ENCODE measurements at regions of chr7 and their contacts with region 1.

Region 1: DNA sequence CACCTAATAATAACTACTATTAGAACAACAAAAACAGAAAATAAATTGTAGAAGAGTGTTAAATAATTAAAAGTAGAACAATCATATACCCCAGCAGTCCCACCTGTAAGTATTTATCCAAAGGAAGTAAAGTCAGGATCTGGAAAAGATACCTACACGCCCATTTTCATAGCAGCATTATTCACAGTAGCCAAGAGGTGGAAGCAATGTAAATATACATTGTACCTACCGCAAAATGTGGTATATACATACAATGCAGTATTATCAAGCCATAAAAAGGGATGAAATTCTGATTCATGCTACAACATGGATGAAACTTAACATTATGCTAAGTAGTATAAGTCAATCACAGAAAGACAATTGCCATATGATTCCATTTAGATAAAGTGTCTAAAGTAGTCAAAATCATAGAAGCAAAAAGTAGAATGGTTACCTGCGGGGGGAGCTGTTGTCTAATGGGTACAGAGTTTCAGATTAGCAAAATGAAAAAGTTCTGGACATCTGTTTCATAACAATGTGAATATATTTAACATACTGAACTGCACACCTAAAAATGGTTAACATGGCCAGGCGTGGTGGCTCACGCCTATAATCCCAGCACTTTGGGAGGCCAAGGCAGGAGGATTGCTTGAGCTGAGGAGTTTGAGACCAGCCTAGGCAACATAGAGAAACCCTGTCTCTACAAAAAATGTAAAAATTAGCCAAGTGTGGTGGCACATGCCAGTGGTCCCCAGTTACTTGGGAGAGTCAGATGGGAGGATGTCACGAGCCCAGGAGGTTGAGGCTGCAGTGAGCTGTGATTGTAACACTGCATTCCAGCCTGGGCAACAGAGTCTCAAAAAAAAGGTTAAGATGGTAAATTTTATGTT is 6.0 kb upstream of the TMED4 start:
- DNase-seq: peak; percentile 66
- ATAC-seq: peak; percentile 92
- H3K4me3 ChIP-seq: no peak overlapping the region
- H3K27ac ChIP-seq: no peak overlapping the region
- H3K4me1 ChIP-seq: peaks cover 2% of the 10 kb centered on the region; the same call in 1 of the 2 replicates
- H3K27me3 ChIP-seq: no peaks in the 10 kb centered on the region
- CTCF ChIP-seq: peak; percentile 84
- POLR2A ChIP-seq: no peak
- RAD21 ChIP-seq: peak; percentile 91

Region 2: DNA sequence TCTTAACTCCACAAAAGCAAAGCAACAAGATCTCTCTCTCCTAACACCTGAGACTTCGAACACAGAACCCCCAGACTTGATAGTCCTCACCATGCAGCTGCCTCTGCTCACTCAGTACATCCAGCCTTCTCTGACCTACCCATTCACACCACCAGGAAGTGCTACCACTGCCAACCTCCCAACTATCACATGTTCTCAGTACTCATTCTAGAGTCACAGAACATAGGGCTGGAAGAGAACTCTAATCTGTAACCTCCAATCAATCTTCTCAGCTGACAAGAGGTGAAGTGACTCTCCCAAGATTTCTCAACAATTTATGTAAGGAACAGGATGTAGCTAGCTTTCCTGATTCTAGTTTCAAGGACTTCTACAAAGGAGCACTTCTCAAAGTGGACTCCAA is 101.4 kb before region 1 on chr7:
- CTCF ChIA-PET with region 1: no interaction called
- POLR2A ChIA-PET with region 1: no interaction called
- dilution Hi-C with region 1: no loop called
- in situ Hi-C with region 1: no loop called
- intact Hi-C with region 1: no loop called
- DNase-seq: peak; percentile 49
- ATAC-seq: no peak
- H3K4me3 ChIP-seq: no peak overlapping the region
- H3K27ac ChIP-seq: no peak overlapping the region
- H3K4me1 ChIP-seq: peaks cover 2% of the 10 kb centered on the region; the same call in 1 of the 2 replicates
- H3K27me3 ChIP-seq: no peaks in the 10 kb centered on the region
- CTCF ChIP-seq: 0 out of 2 replicates have a peak, but pooled peaks have one; percentile 14
- POLR2A ChIP-seq: no peak
- RAD21 ChIP-seq: no peak

Region 3: GRCh38 chr7:44498230-44498954 is 89.7 kb before region 1 on chr7:
- CTCF ChIA-PET with region 1: no interaction called
- POLR2A ChIA-PET with region 1: no interaction called
- dilution Hi-C with region 1: no loop called
- in situ Hi-C with region 1: no loop called
- intact Hi-C with region 1: no loop called
- DNase-seq: no peak
- ATAC-seq: no peak
- H3K4me3 ChIP-seq: no peak overlapping the region
- H3K27ac ChIP-seq: no peak overlapping the region
- H3K4me1 ChIP-seq: no peaks in the 10 kb centered on the region
- H3K27me3 ChIP-seq: peaks cover 12% of the 10 kb centered on the region
- CTCF ChIP-seq: no peak
- POLR2A ChIP-seq: no peak
- RAD21 ChIP-seq: no peak

Region 4: DNA sequence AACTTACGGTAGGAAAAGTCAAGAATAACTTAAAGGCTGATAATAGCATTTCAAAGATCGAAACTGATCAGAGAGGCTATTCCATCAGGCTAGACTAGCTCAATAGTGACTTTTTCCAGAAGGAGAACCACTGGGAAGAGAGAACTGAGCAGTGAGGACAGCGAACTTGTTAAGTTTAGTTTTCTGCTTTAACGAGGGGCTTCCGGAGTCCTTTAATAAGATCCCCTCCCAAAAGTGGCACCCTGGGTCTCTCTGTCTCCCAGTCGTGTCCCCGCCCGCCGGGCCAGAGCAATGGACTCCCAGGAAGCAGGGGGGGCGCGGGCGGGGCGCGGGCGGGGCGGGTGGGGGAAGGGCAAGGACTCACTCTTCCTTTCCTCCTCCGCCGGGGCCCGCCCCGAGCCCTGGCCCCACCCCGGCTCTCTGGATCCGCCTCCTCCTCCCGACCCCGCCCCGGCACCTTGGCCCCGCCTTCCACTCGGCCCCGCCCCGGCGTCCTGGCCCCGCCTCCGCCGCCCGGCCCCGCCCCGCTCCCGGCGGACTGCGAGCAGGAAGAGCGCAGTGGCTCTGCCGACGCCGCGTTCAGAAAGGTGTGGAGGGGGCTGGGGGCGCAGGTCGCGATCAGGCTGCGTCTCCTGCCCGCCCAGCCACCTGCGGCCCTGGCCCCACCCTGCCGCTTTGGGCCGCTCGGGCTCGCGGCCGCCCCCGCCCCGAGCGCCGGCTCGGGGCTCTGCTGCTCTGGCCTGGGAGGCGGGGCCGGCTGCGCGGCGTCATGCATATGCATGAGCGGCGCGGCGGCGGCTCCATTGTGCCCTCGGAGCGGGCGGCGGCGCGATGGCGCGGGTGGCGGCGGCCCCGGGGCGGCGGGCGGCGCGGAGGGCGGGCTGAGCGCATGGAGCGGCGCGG is 160.2 kb after region 1 on chr7 and contains the start of gene ZMIZ2:
- CTCF ChIA-PET with region 1: no interaction called
- POLR2A ChIA-PET with region 1: no interaction called
- dilution Hi-C with region 1: no loop called
- in situ Hi-C with region 1: no loop called
- intact Hi-C with region 1: loop called (anchors 5 kb)
- DNase-seq: peak; percentile 76
- ATAC-seq: peak; percentile 98
- H3K4me3 ChIP-seq: peak within 1 kb of the TSS; percentile 99
- H3K27ac ChIP-seq: peak within 1 kb of the TSS; percentile 100
- H3K4me1 ChIP-seq: peaks cover 20% of the 10 kb centered on the region
- H3K27me3 ChIP-seq: no peaks in the 10 kb centered on the region
- CTCF ChIP-seq: no peak
- POLR2A ChIP-seq: peak; percentile 82
- RAD21 ChIP-seq: peak; percentile 20; the same call in 1 of the 2 replicates
- total RNA-seq, gene ZMIZ2: 2.8 and 3.0 TPM in 2 replicates

Region 5: GRCh38 chr7:44921607-44922359 is 333.7 kb after region 1 on chr7:
- CTCF ChIA-PET with region 1: no interaction called
- POLR2A ChIA-PET with region 1: no interaction called
- dilution Hi-C with region 1: no loop called
- in situ Hi-C with region 1: loop called (anchors 5 kb)
- intact Hi-C with region 1: loop called (anchors 1 kb)
- DNase-seq: peak; percentile 57
- ATAC-seq: peak; percentile 98
- H3K4me3 ChIP-seq: no peak overlapping the region
- H3K27ac ChIP-seq: no peak overlapping the region
- H3K4me1 ChIP-seq: no peaks in the 10 kb centered on the region
- H3K27me3 ChIP-seq: peaks cover under 1% of the 10 kb centered on the region
- CTCF ChIP-seq: peak; percentile 84
- POLR2A ChIP-seq: 0 out of 2 replicates have a peak, but pooled peaks have one; percentile 31
- RAD21 ChIP-seq: peak; percentile 90

Region 6: GRCh38 chr7:45111298-45112223 is 523.5 kb after region 1 on chr7 and contains the start of gene TBRG4:
- CTCF ChIA-PET with region 1: no interaction called
- POLR2A ChIA-PET with region 1: interaction called, 12 read pairs
- dilution Hi-C with region 1: no loop called
- in situ Hi-C with region 1: no loop called
- intact Hi-C with region 1: no loop called
- DNase-seq: peak; percentile 91
- ATAC-seq: peak; percentile 95
- H3K4me3 ChIP-seq: peak within 1 kb of the TSS; percentile 86
- H3K27ac ChIP-seq: peak within 1 kb of the TSS; percentile 90
- H3K4me1 ChIP-seq: peaks cover 3% of the 10 kb centered on the region; the same call in 1 of the 2 replicates
- H3K27me3 ChIP-seq: peaks cover 6% of the 10 kb centered on the region
- CTCF ChIP-seq: peak; percentile 44
- POLR2A ChIP-seq: peak; percentile 90
- RAD21 ChIP-seq: peak; percentile 23; the same call in 1 of the 2 replicates
- total RNA-seq, gene TBRG4: 56.7 and 77.6 TPM in 2 replicates